B cell (primary cell): ENCODE measurements at regions of chr9 and their contacts with region 1.

Region 1: GRCh38 chr9:92764988-92765936 is 629 bp upstream of the BICD2 start:
- DNase-seq: peak; percentile 98
- ATAC-seq: peak; percentile 90
- H3K4me3 ChIP-seq: peak overlapping the region; percentile 72 to 91 (median 75)
- H3K4me3 Mint-ChIP-seq: peak overlapping the region; percentile 98
- H3K27ac ChIP-seq: peak overlapping the region; percentile 96 to 99
- H3K27ac Mint-ChIP-seq: peak overlapping the region; percentile 99
- H3K4me1 ChIP-seq: peaks cover 53 to 61% of the 10 kb centered on the region in 2 donors
- H3K4me1 Mint-ChIP-seq: peaks cover 65% of the 10 kb centered on the region
- H3K27me3 ChIP-seq: no peaks in the 10 kb centered on the region
- H3K27me3 Mint-ChIP-seq: no peaks in the 10 kb centered on the region
- CTCF ChIP-seq: peak; percentile 96

Region 2: GRCh38 chr9:92325269-92325990 is 439.8 kb before region 1 on chr9 and contains the starts of genes CENPP and NOL8:
- CTCF ChIA-PET with region 1: no interaction called
- POLR2A ChIA-PET with region 1: no interaction called
- intact Hi-C with region 1: loop called (anchors 10 kb)
- DNase-seq: peak; percentile 97
- ATAC-seq: peak; percentile 91
- H3K4me3 ChIP-seq: peak within 1 kb of the TSS; percentile 79 to 98 (median 90)
- H3K4me3 Mint-ChIP-seq: peak within 1 kb of the TSS; percentile 97
- H3K27ac ChIP-seq: peak within 1 kb of the TSS; percentile 96 to 97
- H3K27ac Mint-ChIP-seq: peak within 1 kb of the TSS; percentile 97
- H3K4me1 ChIP-seq: peaks cover 15 to 20% of the 10 kb centered on the region in 2 donors
- H3K4me1 Mint-ChIP-seq: peaks cover 33% of the 10 kb centered on the region
- H3K27me3 ChIP-seq: no peaks in the 10 kb centered on the region
- H3K27me3 Mint-ChIP-seq: no peaks in the 10 kb centered on the region
- CTCF ChIP-seq: no peak
- total RNA-seq, gene CENPP: 5.3 and 6.2 TPM in 2 replicates
- total RNA-seq, gene NOL8: 89.1 and 91.0 TPM in 2 replicates

Region 3: DNA sequence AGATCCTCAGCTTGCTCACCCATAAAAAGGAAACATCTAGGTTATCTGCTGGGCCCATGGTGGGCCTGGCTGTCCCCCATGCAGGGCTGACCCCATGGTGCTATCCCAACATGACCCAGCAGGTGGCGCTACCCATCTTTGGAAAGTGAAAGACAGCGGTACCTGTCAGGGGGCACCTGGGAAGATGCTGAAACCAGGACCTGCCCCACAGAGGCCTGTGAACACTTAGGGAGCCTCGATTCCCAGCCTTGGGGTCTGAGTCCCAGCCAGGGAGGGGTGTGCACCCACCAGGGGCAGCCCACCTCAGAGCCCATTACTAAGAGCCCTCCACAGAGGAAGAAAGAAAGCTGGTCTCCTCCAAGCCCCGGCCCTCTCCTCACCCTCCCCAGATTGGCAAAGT is 48.7 kb before region 1 on chr9:
- CTCF ChIA-PET with region 1: interaction called, 35 read pairs
- POLR2A ChIA-PET with region 1: interaction called, 4 read pairs
- intact Hi-C with region 1: loop called (anchors 2 kb)
- DNase-seq: peak; percentile 82
- ATAC-seq: peak; percentile 79
- H3K4me3 ChIP-seq: no peak overlapping the region
- H3K4me3 Mint-ChIP-seq: no peak overlapping the region
- H3K27ac ChIP-seq: no peak overlapping the region
- H3K27ac Mint-ChIP-seq: no peak overlapping the region
- H3K4me1 ChIP-seq: peaks cover 31 to 66% of the 10 kb centered on the region in 2 donors
- H3K4me1 Mint-ChIP-seq: peaks cover 54% of the 10 kb centered on the region
- H3K27me3 ChIP-seq: no peaks in the 10 kb centered on the region
- H3K27me3 Mint-ChIP-seq: no peaks in the 10 kb centered on the region
- CTCF ChIP-seq: peak; percentile 93

Region 4: GRCh38 chr9:92790542-92791527 is 25.6 kb after region 1 on chr9:
- CTCF ChIA-PET with region 1: interaction called, 36 read pairs
- POLR2A ChIA-PET with region 1: interaction called, 5 read pairs
- intact Hi-C with region 1: loop called (anchors 1 kb)
- DNase-seq: peak; percentile 88
- ATAC-seq: peak; percentile 97
- H3K4me3 ChIP-seq: no peak overlapping the region
- H3K4me3 Mint-ChIP-seq: no peak overlapping the region
- H3K27ac ChIP-seq: no peak overlapping the region
- H3K27ac Mint-ChIP-seq: no peak overlapping the region
- H3K4me1 ChIP-seq: peaks cover 3 to 7% of the 10 kb centered on the region in 2 donors
- H3K4me1 Mint-ChIP-seq: peaks cover 3% of the 10 kb centered on the region
- H3K27me3 ChIP-seq: peaks cover 0 to 7% (median 0%) of the 10 kb centered on the region in 4 experiments
- H3K27me3 Mint-ChIP-seq: peaks cover 24% of the 10 kb centered on the region
- CTCF ChIP-seq: peak; percentile 87

Region 5: GRCh38 chr9:92877531-92878430 is 112.5 kb after region 1 on chr9 and contains the start of gene ZNF484:
- CTCF ChIA-PET with region 1: no interaction called
- POLR2A ChIA-PET with region 1: no interaction called
- intact Hi-C with region 1: loop called (anchors 1 kb)
- DNase-seq: peak; percentile 99
- ATAC-seq: peak; percentile 96
- H3K4me3 ChIP-seq: peak within 1 kb of the TSS; percentile 68 to 94 (median 78)
- H3K4me3 Mint-ChIP-seq: peak within 1 kb of the TSS; percentile 100
- H3K27ac ChIP-seq: peak within 1 kb of the TSS; percentile 85 to 93
- H3K27ac Mint-ChIP-seq: peak within 1 kb of the TSS; percentile 99
- H3K4me1 ChIP-seq: peaks cover 3 to 9% of the 10 kb centered on the region in 2 donors
- H3K4me1 Mint-ChIP-seq: peaks cover 31% of the 10 kb centered on the region
- H3K27me3 ChIP-seq: no peaks in the 10 kb centered on the region
- H3K27me3 Mint-ChIP-seq: no peaks in the 10 kb centered on the region
- CTCF ChIP-seq: no peak
- total RNA-seq, gene ZNF484: 22.7 and 22.9 TPM in 2 replicates

Region 6: DNA sequence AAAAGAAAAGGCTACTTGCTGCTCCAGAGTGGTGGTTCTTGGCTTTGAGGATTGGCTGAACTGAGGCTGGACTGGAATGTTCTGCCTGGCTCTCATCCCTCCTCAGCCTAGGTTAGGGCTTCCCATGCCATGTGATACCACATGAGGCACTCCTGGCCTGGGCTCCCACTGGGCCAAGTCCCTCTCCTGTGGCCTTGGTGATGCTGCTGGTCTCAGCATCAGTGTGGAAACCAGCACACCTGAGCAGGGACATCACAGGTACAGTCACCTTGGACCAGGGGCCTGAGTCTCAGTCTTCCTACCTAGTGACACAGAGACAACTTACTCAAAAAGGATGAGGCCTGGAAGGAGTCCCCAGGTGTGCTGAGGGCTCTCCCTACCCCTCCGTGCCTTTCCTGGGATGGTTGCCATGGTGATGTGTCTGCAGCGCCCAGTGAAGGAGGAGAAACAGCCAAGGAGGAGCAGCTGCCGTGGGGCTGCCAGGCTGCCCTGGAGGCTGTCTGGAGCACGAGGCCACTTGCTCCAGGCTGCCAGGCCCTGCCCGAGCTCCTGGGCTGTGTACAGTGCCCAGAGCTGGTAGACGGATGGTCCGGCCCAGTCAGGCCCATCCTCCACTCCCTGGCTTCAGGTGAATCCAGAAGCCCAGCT is 489.7 kb after region 1 on chr9:
- CTCF ChIA-PET with region 1: no interaction called
- POLR2A ChIA-PET with region 1: no interaction called
- intact Hi-C with region 1: no loop called
- DNase-seq: no peak
- ATAC-seq: no peak
- H3K4me3 ChIP-seq: no peak overlapping the region
- H3K4me3 Mint-ChIP-seq: no peak overlapping the region
- H3K27ac ChIP-seq: no peak overlapping the region
- H3K27ac Mint-ChIP-seq: no peak overlapping the region
- H3K4me1 ChIP-seq: no peaks in the 10 kb centered on the region
- H3K4me1 Mint-ChIP-seq: no peaks in the 10 kb centered on the region
- H3K27me3 ChIP-seq: peaks cover 0 to 2% (median 0%) of the 10 kb centered on the region in 4 experiments
- H3K27me3 Mint-ChIP-seq: no peaks in the 10 kb centered on the region
- CTCF ChIP-seq: no peak

Region 7: DNA sequence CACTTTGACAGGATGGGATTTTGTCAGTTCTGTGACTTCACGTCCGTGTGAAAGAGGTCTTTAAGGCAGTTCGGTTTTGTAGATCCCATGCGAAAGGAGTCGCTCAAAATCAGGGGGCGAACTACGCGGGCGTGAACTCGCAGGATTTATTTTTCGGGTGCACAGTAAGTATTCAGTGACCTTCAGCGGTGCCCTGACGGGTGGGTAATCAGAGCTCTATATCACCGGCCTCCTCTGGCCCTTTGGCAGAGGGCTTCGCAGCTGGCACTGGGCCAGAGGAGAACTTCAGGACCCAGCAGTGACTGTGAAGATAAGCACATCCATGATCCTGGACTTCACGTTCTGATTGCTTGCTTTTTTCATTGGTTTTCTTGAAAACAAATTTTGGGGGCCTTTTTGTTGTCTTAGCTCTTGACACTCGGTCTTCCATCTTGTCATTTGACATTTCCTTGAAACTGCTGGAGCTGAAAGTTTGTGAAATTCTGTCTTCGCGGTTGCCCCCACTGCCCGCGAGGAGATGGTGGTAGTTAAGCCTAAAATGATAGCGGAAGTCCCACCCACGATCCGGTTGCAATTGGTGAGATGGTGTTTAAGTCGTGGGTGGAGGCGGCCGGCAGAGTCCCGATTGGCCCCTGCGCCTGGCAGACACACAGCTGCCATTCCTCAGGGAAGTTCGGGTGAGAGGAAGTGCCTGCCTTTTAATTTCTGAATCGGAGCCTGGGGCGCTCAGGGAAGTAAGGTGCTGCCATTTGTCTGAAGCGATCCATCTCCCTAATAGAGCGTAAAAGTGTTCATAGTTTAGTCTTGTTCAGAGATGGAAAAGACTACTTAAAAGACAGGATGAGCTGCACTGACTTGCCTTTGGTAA is 688.0 kb after region 1 on chr9 and contains the start of gene FAM120AOS:
- CTCF ChIA-PET with region 1: no interaction called
- POLR2A ChIA-PET with region 1: no interaction called
- intact Hi-C with region 1: loop called (anchors 5 kb)
- DNase-seq: peak; percentile 92
- ATAC-seq: peak; percentile 72
- H3K4me3 ChIP-seq: peak within 1 kb of the TSS; percentile 73 to 96 (median 84)
- H3K4me3 Mint-ChIP-seq: peak within 1 kb of the TSS; percentile 93
- H3K27ac ChIP-seq: peak within 1 kb of the TSS; percentile 65 to 79
- H3K27ac Mint-ChIP-seq: peak within 1 kb of the TSS; percentile 93
- H3K4me1 ChIP-seq: peaks cover 20 to 29% of the 10 kb centered on the region in 2 donors
- H3K4me1 Mint-ChIP-seq: peaks cover 44% of the 10 kb centered on the region
- H3K27me3 ChIP-seq: no peaks in the 10 kb centered on the region
- H3K27me3 Mint-ChIP-seq: no peaks in the 10 kb centered on the region
- CTCF ChIP-seq: no peak
- total RNA-seq, gene FAM120AOS: 47.8 and 51.2 TPM in 2 replicates